AG04450 (cell line): ENCODE measurements at regions of chr4 and their contacts with region 1.

Region 1: DNA sequence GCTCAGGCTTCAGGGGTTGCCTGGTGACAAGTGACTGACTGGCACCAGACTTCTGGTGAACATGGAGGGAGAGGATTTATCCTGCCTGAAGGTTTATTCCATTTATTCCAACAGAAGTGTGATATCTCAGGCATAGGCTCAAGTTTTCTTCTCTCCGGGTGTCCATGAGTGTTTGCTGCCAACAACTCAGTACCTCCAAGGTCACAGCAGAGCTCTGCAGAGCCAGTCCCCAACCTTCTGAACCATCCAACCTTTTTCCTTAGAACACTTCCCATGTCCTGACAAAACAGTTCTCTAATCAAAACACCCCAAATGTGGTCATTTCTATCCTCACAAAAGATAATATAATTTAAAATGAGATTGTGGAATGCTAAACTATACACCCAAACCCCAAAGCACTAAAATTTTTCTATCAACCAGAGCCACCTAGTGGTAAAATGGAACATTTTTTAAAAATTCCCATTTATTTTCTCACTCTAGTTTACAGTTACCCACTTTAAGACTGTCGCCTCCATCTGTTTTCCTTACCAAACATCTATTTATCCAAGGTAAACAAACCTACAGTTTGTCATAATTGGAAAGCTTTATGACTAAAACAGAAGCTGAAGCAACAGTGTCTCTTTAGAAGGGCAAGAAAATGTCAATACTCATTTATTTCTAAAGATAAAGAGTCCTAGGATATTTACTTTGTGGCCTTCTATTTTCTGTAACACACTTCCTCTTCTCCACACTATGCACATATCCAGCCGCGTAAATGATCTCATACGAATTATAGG is 39.6 kb downstream of the TMEM154 start:
- DNase-seq: no peak
- H3K4me3 ChIP-seq: no peak overlapping the region
- H3K27ac ChIP-seq: no peak overlapping the region
- H3K27me3 ChIP-seq: peaks cover 3% of the 10 kb centered on the region
- CTCF ChIP-seq: peak; percentile 59

Region 2: DNA sequence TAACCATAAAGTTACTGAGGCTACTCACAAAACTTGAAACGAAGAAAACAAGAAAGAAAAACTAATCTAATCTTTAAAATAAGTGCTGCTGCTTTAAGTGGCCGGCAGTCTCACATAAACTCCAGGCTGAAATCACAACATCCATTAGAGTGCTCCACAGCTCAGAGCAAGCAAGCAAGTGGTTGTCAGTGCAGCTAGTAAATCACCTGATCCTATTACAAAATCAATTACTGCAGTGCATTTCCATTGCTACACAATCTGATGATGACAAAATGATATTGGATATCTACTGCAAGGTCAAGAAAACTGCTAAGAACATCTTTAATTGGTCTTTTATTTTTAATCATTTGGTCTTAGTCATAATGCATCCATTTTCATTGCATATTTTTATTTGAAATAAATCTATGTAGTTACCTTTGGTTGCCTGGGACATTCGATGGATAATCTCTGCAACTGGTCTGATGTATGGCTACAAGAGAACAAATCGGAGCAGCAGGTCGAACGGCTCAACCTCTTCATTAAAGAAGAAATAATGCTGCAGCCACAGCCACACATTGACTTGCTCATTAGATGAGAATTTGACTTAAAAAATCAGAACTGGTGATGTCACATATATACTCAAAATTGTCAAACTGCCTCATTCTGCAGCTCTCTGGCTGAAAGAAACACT is 192.1 kb before region 1 on chr4:
- CTCF ChIA-PET with region 1: interaction called, 13 read pairs
- POLR2A ChIA-PET with region 1: no interaction called
- DNase-seq: no peak
- H3K4me3 ChIP-seq: no peak overlapping the region
- H3K27ac ChIP-seq: no peak overlapping the region
- H3K27me3 ChIP-seq: no peaks in the 10 kb centered on the region
- CTCF ChIP-seq: no peak

Region 3: GRCh38 chr4:152559641-152560040 is 80.6 kb before region 1 on chr4:
- CTCF ChIA-PET with region 1: no interaction called
- POLR2A ChIA-PET with region 1: no interaction called
- DNase-seq: no peak
- H3K4me3 ChIP-seq: no peak overlapping the region
- H3K27ac ChIP-seq: no peak overlapping the region
- H3K27me3 ChIP-seq: no peaks in the 10 kb centered on the region
- CTCF ChIP-seq: no peak

Region 4: DNA sequence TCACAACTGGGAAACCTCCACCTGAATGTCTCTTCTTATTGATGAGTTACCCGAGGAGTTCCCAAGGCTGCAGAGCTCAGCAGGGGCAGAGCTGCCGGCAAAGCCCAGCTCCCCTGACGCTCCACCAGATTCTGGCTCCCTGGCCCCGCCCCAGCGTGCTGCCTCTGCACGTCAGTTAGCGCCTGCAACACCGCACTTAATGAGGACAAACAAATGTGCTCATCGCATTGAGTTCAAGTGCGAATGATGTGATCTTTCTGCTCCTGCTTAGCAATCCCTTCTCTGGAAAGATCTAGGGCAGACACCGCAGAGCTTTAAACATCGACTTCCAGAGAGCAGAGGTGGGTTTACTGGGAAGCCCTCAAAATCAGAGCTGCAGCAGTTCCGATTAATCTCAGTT is 48.9 kb before region 1 on chr4:
- CTCF ChIA-PET with region 1: interaction called, 14 read pairs
- POLR2A ChIA-PET with region 1: no interaction called
- DNase-seq: no peak
- H3K4me3 ChIP-seq: peak overlapping the region; percentile 30; the same call in 1 of the 2 replicates
- H3K27ac ChIP-seq: no peak overlapping the region
- H3K27me3 ChIP-seq: peaks cover 10% of the 10 kb centered on the region
- CTCF ChIP-seq: no peak

Region 5: DNA sequence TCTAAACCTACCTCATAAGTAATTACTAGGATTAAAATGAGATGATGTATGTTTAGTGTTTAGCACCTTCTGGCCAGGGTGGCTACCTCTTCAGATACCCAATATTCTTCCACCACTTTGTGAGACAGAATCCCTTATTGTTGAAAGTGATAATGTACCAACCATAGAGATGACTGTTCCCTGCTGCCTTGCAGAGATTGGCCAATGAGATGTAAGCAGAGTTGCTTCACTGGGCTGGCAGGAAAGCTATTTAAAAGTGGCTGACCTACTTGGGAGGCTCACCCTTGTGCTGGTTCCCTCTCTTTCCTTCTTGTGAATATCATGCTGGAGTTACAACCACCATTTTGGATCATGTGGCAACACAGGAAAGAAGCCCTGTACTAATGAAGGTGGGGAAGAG is 19.3 kb before region 1 on chr4:
- CTCF ChIA-PET with region 1: interaction called, 10 read pairs
- POLR2A ChIA-PET with region 1: no interaction called
- DNase-seq: no peak
- H3K4me3 ChIP-seq: no peak overlapping the region
- H3K27ac ChIP-seq: no peak overlapping the region
- H3K27me3 ChIP-seq: peaks cover 3% of the 10 kb centered on the region
- CTCF ChIP-seq: no peak

Region 6: DNA sequence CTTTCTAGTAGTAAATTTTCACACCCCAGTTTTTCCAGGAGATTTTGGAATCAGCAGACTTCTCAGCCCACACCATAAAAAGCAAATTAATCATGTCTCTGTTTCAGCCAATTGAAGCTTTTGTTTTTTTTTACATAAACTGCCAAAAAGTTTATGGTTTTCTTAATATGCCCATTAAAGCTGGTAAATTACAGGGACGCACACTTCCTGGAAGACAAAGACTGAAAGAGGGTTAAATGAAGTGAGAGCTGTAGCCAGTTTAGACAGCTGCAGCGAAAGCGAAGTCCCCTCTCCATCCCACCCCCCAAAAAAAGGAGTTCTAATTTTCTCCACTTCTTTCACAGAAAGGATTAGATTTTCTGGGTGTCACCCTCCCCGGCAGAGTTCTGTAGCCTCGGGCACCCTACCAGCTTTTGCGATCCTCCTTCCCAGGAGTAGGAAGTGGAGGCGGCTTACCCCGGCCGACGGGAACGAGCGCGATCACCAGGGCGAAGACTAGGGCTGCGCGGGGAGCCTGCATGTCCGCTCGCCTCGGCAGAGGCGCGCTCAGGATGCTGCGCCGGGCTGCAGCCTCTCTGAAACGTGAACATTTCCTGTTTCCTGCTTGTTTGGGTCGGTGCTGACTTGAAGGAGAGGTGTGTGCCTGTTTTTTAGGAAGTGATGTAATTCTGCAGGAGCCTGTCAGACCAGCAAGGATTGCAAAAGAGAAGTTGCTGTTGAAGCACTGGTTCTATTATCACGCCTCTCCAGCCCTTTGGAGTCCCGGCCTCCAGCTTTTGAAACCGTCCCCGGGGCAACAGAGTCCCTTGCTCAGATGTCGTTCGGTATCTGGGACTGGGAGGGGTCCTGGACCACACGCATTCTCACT is 39.4 kb after region 1 on chr4 and contains the start of gene TMEM154:
- CTCF ChIA-PET with region 1: no interaction called
- POLR2A ChIA-PET with region 1: no interaction called
- DNase-seq: peak; percentile 21
- H3K4me3 ChIP-seq: peak within 1 kb of the TSS; percentile 59
- H3K27ac ChIP-seq: peak within 1 kb of the TSS; percentile 47
- H3K27me3 ChIP-seq: peaks cover 13% of the 10 kb centered on the region
- CTCF ChIP-seq: no peak
- polyA plus RNA-seq, gene TMEM154: 0.63 and 0.83 TPM in 2 replicates